Endothelial cell of umbilical vein (primary cell): ENCODE measurements at regions of chr1 and their contacts with region 1.

Region 1: GRCh38 chr1:175481126-175482066 is 262.0 kb downstream of the TNR start:
- DNase-seq: peak; percentile 59
- H3K4me3 ChIP-seq: no peak overlapping the region
- H3K27ac ChIP-seq: no peak overlapping the region
- H3K4me1 ChIP-seq: peaks cover 14% of the 10 kb centered on the region
- H3K27me3 ChIP-seq: peaks cover 15 to 16% of the 10 kb centered on the region in 2 experiments
- CTCF ChIP-seq: peak; percentile 44 to 47
- POLR2A ChIP-seq: no peak

Region 2: DNA sequence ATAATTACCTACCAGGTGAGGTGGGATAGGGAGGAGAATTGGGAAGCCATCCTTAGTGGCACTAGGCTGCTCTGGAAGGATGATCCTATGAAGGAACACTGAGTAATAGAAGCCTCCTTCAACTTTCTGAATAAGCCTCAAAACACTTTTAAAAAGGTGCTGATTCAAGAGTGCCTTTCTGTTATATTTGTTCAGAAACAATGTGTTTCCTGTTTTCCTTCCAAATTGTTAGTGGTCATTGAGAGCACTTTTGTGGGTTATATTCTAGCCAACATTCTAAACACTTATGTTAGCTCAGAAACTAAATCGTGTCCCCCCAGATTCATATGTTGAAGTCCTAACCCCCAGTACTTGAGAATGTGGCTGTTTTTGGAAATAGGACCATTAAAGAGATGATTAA is 24.7 kb after region 1 on chr1:
- CTCF ChIA-PET with region 1: interaction called, 5 read pairs
- POLR2A ChIA-PET with region 1: no interaction called
- dilution Hi-C with region 1: no loop called
- intact Hi-C with region 1: loop called (anchors 1 kb)
- DNase-seq: peak; percentile 81
- H3K4me3 ChIP-seq: no peak overlapping the region
- H3K27ac ChIP-seq: peak overlapping the region; percentile 69
- H3K4me1 ChIP-seq: peaks cover 53% of the 10 kb centered on the region
- H3K27me3 ChIP-seq: no peaks in the 10 kb centered on the region
- CTCF ChIP-seq: no peak
- POLR2A ChIP-seq: no peak

Region 3: GRCh38 chr1:175597969-175598765 is 116.8 kb after region 1 on chr1:
- CTCF ChIA-PET with region 1: no interaction called
- POLR2A ChIA-PET with region 1: no interaction called
- dilution Hi-C with region 1: no loop called
- intact Hi-C with region 1: loop called (anchors 1 kb)
- DNase-seq: peak; percentile 83
- H3K4me3 ChIP-seq: no peak overlapping the region
- H3K27ac ChIP-seq: peak overlapping the region; percentile 96
- H3K4me1 ChIP-seq: peaks cover 27% of the 10 kb centered on the region
- H3K27me3 ChIP-seq: no peaks in the 10 kb centered on the region
- CTCF ChIP-seq: no peak
- POLR2A ChIP-seq: no peak

Region 4: GRCh38 chr1:175708788-175709187 is 227.4 kb after region 1 on chr1:
- CTCF ChIA-PET with region 1: interaction called, 11 read pairs
- POLR2A ChIA-PET with region 1: no interaction called
- dilution Hi-C with region 1: no loop called
- intact Hi-C with region 1: no loop called
- DNase-seq: peak; percentile 20
- H3K4me3 ChIP-seq: no peak overlapping the region
- H3K27ac ChIP-seq: no peak overlapping the region
- H3K4me1 ChIP-seq: no peaks in the 10 kb centered on the region
- H3K27me3 ChIP-seq: peaks cover under 1 to 3% of the 10 kb centered on the region in 2 experiments
- CTCF ChIP-seq: no peak
- POLR2A ChIP-seq: no peak

Region 5: DNA sequence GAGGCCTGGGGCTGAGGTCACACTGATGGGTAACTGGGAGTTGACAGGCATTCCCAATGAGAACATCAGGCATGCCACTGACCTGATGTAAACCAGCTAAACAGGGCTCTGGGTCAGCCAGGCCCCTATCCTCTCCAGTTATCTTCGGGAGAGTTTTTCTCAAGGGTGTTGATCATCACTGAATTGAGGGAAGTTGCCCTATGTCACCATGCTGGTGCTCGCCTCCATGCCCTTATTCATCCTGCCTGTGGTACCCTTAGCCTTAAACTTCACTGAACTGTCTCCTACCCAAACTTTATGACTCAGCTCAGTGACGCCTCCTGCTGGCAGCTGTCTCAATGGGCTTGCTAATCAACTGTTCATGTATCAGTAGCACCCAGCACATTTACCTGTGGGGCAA is 342.7 kb after region 1 on chr1:
- CTCF ChIA-PET with region 1: interaction called, 17 read pairs
- POLR2A ChIA-PET with region 1: no interaction called
- dilution Hi-C with region 1: no loop called
- intact Hi-C with region 1: loop called (anchors 1 kb)
- DNase-seq: peak; percentile 41
- H3K4me3 ChIP-seq: no peak overlapping the region
- H3K27ac ChIP-seq: no peak overlapping the region
- H3K4me1 ChIP-seq: no peaks in the 10 kb centered on the region
- H3K27me3 ChIP-seq: no peaks in the 10 kb centered on the region
- CTCF ChIP-seq: peak; percentile 50 to 54
- POLR2A ChIP-seq: no peak